AG04450 (cell line): ENCODE measurements at regions of chr12 and their contacts with region 1.

Region 1: GRCh38 chr12:121005346-121005815 is 10.9 kb downstream of the C12orf43 start:
- DNase-seq: no peak
- H3K4me3 ChIP-seq: no peak overlapping the region
- H3K27ac ChIP-seq: no peak overlapping the region
- H3K27me3 ChIP-seq: no peaks in the 10 kb centered on the region
- CTCF ChIP-seq: peak; percentile 70

Region 2: GRCh38 chr12:120800665-120801064 is 204.7 kb before region 1 on chr12:
- CTCF ChIA-PET with region 1: no interaction called
- POLR2A ChIA-PET with region 1: no interaction called
- DNase-seq: no peak
- H3K4me3 ChIP-seq: no peak overlapping the region
- H3K27ac ChIP-seq: no peak overlapping the region
- H3K27me3 ChIP-seq: no peaks in the 10 kb centered on the region
- CTCF ChIP-seq: no peak

Region 3: GRCh38 chr12:121060149-121061001 is 55.0 kb after region 1 on chr12:
- CTCF ChIA-PET with region 1: interaction called, 13 read pairs
- POLR2A ChIA-PET with region 1: no interaction called
- DNase-seq: no peak
- H3K4me3 ChIP-seq: peak overlapping the region; percentile 43
- H3K27ac ChIP-seq: peak overlapping the region; percentile 47
- H3K27me3 ChIP-seq: peaks cover 2% of the 10 kb centered on the region
- CTCF ChIP-seq: peak; percentile 66